ENCODE measurements at regions of chr15 and their contacts with region 1.

Region 1: DNA sequence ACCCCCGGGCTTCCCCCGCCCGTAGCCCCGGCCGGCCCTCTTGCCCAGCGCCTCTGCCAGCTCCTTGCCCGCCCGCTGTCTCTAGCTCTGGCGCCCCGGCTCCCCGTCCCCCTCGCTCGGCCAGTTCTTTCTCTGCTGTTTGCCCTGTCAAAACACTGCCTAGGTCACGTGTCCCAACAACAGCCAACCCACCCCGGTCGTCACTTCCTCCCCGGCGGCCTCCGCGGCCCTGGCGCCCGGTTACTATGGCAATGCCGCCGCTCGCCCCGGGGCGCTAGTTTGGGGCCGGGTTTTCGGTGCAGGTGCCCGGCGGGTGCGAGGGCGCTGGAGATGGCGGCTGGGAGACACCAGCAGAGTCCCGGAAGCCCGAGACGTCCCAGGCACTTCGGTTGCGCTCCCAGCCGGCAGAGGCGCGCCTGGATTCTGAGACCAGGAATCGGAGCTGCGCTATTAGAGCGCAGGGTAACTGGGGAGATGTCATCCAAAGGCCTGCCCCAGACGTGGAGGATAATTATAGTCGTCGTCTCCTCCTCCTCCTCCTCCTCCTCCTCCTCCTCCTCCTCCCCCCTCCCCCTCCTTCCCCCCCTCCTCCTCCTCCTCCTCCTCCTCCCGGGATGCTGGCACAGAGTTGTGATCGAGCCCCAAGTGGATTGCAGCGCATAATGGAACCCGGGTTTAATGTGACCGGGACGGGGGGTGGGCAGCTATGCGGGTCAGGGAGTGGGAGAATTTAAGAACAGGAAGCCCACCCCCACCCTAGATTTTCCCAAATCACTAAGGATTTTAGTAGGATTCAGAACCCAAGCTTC is at the start of gene ATOSA:
- DNase-seq: peak; percentile 91
- H3K4me3 Mint-ChIP-seq: peak within 1 kb of the TSS; percentile 91
- H3K27ac Mint-ChIP-seq: peak within 1 kb of the TSS; percentile 100
- H3K4me1 Mint-ChIP-seq: peaks cover 38% of the 10 kb centered on the region
- H3K27me3 Mint-ChIP-seq: no peaks in the 10 kb centered on the region
- total RNA-seq, gene ATOSA: 14.8 and 16.5 TPM in 2 replicates

Region 2: GRCh38 chr15:52179278-52180195 is 499.9 kb before region 1 on chr15:
- intact Hi-C with region 1: loop called (anchors 5 kb)
- DNase-seq: peak; percentile 87
- H3K4me3 Mint-ChIP-seq: peak overlapping the region; percentile 90
- H3K27ac Mint-ChIP-seq: peak overlapping the region; percentile 94
- H3K4me1 Mint-ChIP-seq: peaks cover 37% of the 10 kb centered on the region
- H3K27me3 Mint-ChIP-seq: no peaks in the 10 kb centered on the region

Region 3: GRCh38 chr15:52331490-52332240 is 347.8 kb before region 1 on chr15:
- intact Hi-C with region 1: loop called (anchors 1 kb)
- DNase-seq: peak; percentile 58
- H3K4me3 Mint-ChIP-seq: peak overlapping the region; percentile 57
- H3K27ac Mint-ChIP-seq: peak overlapping the region; percentile 76
- H3K4me1 Mint-ChIP-seq: peaks cover 28% of the 10 kb centered on the region
- H3K27me3 Mint-ChIP-seq: no peaks in the 10 kb centered on the region

Region 4: DNA sequence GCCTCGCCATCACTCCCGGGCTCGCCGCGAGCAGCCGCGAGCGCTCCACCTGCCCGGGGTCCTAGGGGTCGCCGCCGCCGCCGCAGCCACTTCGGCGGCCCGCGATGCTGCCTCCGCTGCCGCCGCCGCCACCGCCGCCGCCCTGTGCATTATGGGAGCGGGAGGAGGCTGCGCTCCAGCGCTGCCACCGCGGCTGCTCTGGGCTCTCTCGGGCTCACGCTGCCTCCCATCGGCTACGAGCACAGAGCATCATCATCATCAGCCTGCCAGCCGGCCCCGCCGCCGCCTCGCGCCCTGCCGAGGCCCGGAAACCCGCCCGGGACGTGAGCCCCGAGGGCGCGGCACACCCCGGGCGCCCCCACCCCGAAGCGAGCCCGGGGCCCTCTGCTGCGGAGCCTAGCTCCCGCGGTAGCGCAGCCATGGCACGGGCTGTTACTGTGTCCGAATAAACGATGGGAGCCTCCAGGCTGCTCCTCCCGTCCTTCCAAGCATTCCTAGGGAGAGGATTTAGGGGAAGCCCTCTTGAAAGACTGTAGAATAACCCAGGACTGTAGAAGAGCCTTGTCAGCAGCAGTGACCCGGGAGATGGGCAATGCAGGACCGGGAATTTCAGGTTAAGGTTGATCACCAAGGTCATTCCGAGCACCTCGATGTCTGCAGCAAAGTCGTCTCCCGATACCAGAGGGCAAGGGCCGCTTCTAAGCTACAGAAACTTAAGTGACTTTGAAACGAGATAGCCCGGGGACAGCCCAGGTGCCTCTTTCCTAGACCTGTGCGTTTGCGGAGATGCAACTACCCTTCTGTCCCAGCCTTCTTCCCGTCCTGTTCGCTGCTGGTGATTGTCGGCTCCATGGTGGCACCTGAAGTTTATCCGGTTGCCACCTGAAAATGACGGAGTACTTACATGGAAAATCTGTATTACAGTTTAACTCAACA is 150.2 kb before region 1 on chr15:
- intact Hi-C with region 1: loop called (anchors 1 kb)
- DNase-seq: peak; percentile 76
- H3K4me3 Mint-ChIP-seq: peak overlapping the region; percentile 77
- H3K27ac Mint-ChIP-seq: peak overlapping the region; percentile 75
- H3K4me1 Mint-ChIP-seq: peaks cover 29% of the 10 kb centered on the region
- H3K27me3 Mint-ChIP-seq: peaks cover 16% of the 10 kb centered on the region

Region 5: GRCh38 chr15:52658955-52659354 is 20.5 kb before region 1 on chr15:
- intact Hi-C with region 1: loop called (anchors 1 kb)
- DNase-seq: peak; percentile 17
- H3K4me3 Mint-ChIP-seq: no peak overlapping the region
- H3K27ac Mint-ChIP-seq: peak overlapping the region; percentile 49
- H3K4me1 Mint-ChIP-seq: peaks cover 29% of the 10 kb centered on the region
- H3K27me3 Mint-ChIP-seq: no peaks in the 10 kb centered on the region

Region 6: DNA sequence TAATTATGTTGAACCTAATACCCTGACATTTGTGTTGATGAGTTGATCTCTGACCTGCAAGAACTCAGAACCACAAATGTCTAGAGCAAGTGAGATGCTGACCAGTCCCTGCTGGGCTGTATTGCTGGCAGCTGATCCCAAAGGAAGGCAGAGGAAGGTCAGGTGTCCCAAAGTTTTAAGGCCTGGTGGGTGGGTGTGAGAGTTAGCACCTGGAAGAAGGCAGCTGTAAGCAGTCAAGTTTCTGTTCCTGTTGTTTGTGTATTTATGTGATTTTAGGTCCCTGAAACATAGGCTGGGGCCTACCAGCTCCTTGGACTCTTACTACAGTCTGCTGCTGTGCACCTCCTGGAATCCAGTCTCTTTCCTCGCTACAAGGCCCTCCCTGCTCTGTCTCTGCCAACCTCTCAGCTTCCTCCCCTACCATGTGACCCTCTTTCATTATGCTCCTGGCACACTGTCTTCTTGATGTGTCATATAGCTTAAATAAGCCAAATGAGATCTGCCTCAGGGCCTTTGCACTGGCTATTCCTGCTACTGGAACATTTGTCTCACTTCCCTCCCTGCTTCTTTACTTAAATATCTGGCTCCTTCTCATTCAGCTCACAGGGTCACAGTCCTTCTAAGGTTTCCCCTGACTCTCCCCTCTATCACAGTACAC is 30.7 kb after region 1 on chr15:
- intact Hi-C with region 1: no loop called
- DNase-seq: no peak
- H3K4me3 Mint-ChIP-seq: no peak overlapping the region
- H3K27ac Mint-ChIP-seq: no peak overlapping the region
- H3K4me1 Mint-ChIP-seq: peaks cover 6% of the 10 kb centered on the region
- H3K27me3 Mint-ChIP-seq: peaks cover 8% of the 10 kb centered on the region

Measured in activated T-helper 1 cell treated with anti-CD3 and anti-CD28 coated beads, Interleukin-12 subunit alpha, Interleukin-12 subunit beta, Interleukin-2, Interleukin-4 antibody, amounts not matched to agents 30 ng/mL and 10 ng/mL and 1 ng/mL, durations not matched to agents 14 hours and 24 hours and 36 hours (primary cell).